T-cell (primary cell): ENCODE measurements at regions of chr4 and their contacts with region 1.

Region 1: DNA sequence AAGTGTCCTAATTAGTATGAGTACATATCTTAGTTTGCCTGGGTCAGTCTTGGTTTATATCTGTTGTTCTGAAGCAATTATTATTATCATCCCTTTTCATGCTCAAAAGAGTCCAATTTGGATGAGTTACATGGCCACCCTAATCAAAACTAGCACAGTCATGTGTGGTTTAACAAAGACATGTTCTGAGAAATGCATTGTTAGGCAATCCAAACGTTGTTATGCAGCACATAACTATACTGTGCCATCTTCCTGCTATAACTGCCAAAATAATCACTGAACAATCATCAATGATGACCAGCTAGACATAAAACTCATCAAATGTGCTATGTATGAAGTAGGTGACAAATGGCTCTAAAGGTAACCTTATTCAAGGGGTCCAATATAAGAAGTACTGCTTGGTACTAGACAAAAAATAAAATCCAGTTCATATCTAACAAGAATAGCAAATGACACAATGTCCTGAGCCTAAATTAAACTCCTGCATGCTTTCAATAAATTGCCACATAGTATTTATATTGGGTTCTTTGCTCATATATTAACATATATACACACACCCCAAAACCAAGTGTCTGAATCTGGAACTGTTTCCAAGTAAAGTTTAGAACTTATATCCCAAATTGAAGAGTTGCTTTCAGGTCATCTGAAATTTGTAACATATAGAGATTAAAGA is 41.9 kb downstream of the CNOT6L start:
- DNase-seq: no peak
- ATAC-seq: peak in 1 of 4 experiments; percentile 7
- H3K4me3 ChIP-seq: no peak overlapping the region
- H3K4me3 Mint-ChIP-seq: peak overlapping the region in 1 of 3 donors; percentile 24
- H3K27ac ChIP-seq: no peak overlapping the region
- H3K27ac Mint-ChIP-seq: peak overlapping the region; percentile 25 to 41
- H3K4me1 ChIP-seq: peaks cover 9 to 13% of the 10 kb centered on the region in 2 experiments
- H3K4me1 Mint-ChIP-seq: peaks cover 60 to 69% (median 68%) of the 10 kb centered on the region in 3 donors
- H3K27me3 ChIP-seq: no peaks in the 10 kb centered on the region
- H3K27me3 Mint-ChIP-seq: no peaks in the 10 kb centered on the region

Region 2: DNA sequence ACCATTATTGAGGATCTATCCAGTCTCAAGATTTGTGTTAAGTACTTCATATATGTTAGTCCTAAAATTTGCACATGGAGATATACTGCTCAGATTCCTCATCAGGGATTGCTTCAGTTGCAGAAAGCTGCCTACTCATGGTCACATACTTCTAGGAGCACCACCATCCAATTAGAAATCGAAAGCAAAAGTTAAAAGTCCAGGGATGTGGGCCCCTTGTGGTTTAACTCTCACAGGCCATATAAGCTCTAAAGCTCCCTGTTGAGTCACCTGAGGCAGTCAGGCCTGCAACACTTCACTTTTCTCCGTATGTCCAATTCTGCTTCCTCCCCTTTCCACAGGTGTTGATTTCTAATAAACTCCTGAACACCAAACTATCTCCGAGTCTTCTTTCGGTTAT is 42.3 kb before region 1 on chr4:
- CTCF ChIA-PET with region 1: no interaction called
- POLR2A ChIA-PET with region 1: no interaction called
- DNase-seq: peak in 15 of 35 experiments; percentile 1 to 63 (median 7)
- ATAC-seq: peak; percentile 55 to 77 (median 66)
- H3K4me3 ChIP-seq: no peak overlapping the region
- H3K4me3 Mint-ChIP-seq: peak overlapping the region; percentile 50 to 57 (median 51)
- H3K27ac ChIP-seq: peak overlapping the region; percentile 46
- H3K27ac Mint-ChIP-seq: peak overlapping the region; percentile 82 to 85
- H3K4me1 ChIP-seq: peaks cover 5 to 8% of the 10 kb centered on the region in 2 experiments
- H3K4me1 Mint-ChIP-seq: peaks cover 65 to 80% (median 73%) of the 10 kb centered on the region in 3 donors
- H3K27me3 ChIP-seq: no peaks in the 10 kb centered on the region
- H3K27me3 Mint-ChIP-seq: no peaks in the 10 kb centered on the region

Region 3: DNA sequence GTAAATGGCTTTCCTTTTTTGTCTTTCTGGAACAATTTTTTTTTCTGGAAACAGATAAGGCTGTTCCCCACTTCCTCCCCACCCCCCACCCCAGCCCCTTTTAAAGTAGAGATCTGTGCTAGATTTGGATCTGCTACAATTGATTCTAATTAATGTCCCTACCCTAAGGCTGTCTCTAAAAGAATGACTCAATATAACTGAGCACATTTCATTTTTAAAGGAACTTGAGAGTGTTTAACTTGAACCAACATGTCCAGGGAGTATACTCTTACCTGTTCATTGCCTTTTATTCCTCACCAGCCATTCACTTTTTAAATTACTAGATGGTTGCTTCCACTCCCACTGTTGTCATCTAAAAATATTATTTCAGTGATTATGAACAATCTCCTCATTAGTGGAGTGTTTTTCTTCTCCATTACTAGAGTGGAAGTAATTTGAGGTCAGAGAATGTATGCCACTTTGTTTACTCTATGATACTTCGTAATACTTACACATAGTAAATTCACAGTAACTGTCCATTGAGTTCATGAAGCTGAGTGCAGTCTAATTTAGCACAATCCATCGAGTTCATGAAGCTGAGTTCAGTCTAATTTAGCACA is 56.0 kb after region 1 on chr4:
- CTCF ChIA-PET with region 1: interaction called in 1 of 2 experiments, 21 read pairs
- POLR2A ChIA-PET with region 1: no interaction called
- DNase-seq: no peak
- ATAC-seq: no peak
- H3K4me3 ChIP-seq: no peak overlapping the region
- H3K4me3 Mint-ChIP-seq: no peak overlapping the region
- H3K27ac ChIP-seq: no peak overlapping the region
- H3K27ac Mint-ChIP-seq: no peak overlapping the region
- H3K4me1 ChIP-seq: peaks cover 2 to 5% of the 10 kb centered on the region in 2 experiments
- H3K4me1 Mint-ChIP-seq: peaks cover 18 to 28% (median 20%) of the 10 kb centered on the region in 3 donors
- H3K27me3 ChIP-seq: no peaks in the 10 kb centered on the region
- H3K27me3 Mint-ChIP-seq: no peaks in the 10 kb centered on the region

Region 4: GRCh38 chr4:78601013-78601412 is 823.7 kb after region 1 on chr4:
- CTCF ChIA-PET with region 1: no interaction called
- POLR2A ChIA-PET with region 1: interaction called in 1 of 2 experiments, 14 read pairs
- DNase-seq: no peak
- ATAC-seq: no peak
- H3K4me3 ChIP-seq: no peak overlapping the region
- H3K4me3 Mint-ChIP-seq: no peak overlapping the region
- H3K27ac ChIP-seq: no peak overlapping the region
- H3K27ac Mint-ChIP-seq: no peak overlapping the region
- H3K4me1 ChIP-seq: no peaks in the 10 kb centered on the region
- H3K4me1 Mint-ChIP-seq: no peaks in the 10 kb centered on the region
- H3K27me3 ChIP-seq: peaks cover 0 to 2% of the 10 kb centered on the region in 2 experiments
- H3K27me3 Mint-ChIP-seq: peaks cover 10 to 15% of the 10 kb centered on the region in 2 donors